ENCODE measurements at regions of chr16 and their contacts with region 1.

Region 1: GRCh38 chr16:66872943-66873684 is 7.2 kb upstream of the PDP2 start:
- DNase-seq: peak; percentile 93
- H3K4me3 Mint-ChIP-seq: peak overlapping the region; percentile 62
- H3K27ac Mint-ChIP-seq: peak overlapping the region; percentile 81
- H3K4me1 Mint-ChIP-seq: peaks cover 38% of the 10 kb centered on the region
- H3K27me3 Mint-ChIP-seq: no peaks in the 10 kb centered on the region

Region 2: GRCh38 chr16:66406534-66407221 is 466.4 kb before region 1 on chr16:
- CTCF ChIA-PET with region 1: interaction called, 31 read pairs
- intact Hi-C with region 1: loop called (anchors 1 kb)
- DNase-seq: peak; percentile 94
- H3K4me3 Mint-ChIP-seq: peak overlapping the region; percentile 83
- H3K27ac Mint-ChIP-seq: no peak overlapping the region
- H3K4me1 Mint-ChIP-seq: peaks cover 26% of the 10 kb centered on the region
- H3K27me3 Mint-ChIP-seq: no peaks in the 10 kb centered on the region

Region 3: DNA sequence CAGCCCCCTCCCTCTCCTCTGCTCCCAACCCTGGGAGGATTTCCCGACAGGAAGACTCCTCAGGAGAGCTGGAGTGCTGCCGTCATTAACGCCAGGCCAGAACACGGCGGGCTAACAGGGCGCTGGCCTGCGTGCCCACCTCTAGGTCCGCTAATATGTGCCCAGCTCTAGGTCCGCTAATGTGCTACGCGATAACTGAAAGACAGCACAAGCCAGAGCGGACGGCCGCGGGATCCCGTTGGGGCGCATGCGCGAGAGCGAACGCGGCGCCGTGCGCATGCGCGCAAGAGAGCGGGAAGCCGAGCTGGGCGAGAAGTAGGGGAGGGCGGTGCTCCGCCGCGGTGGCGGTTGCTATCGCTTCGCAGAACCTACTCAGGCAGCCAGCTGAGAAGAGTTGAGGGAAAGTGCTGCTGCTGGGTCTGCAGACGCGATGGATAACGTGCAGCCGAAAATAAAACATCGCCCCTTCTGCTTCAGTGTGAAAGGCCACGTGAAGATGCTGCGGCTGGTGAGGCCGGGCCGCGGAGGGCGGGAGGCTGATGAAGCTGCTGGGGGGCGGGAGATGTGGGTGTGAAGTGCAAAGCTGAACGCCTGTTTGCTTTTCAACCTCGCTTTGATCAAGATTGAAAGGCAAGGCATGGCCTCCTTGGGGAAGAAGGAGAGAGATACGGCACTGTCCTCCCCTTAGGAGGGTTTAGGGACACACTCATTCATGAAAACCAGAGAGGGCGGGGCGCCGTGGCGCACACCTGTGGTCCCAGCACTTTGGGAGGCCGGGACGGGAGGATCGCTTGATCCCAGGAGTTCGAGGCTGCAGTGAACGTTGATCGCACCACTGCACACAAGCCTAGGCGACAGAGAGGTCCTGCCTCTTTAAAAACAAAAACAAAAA is 320.6 kb before region 1 on chr16 and contains the start of gene CKLF:
- CTCF ChIA-PET with region 1: no interaction called
- intact Hi-C with region 1: loop called (anchors 2 kb)
- DNase-seq: peak; percentile 90
- H3K4me3 Mint-ChIP-seq: peak within 1 kb of the TSS; percentile 87
- H3K27ac Mint-ChIP-seq: peak within 1 kb of the TSS; percentile 95
- H3K4me1 Mint-ChIP-seq: peaks cover 60% of the 10 kb centered on the region
- H3K27me3 Mint-ChIP-seq: no peaks in the 10 kb centered on the region
- total RNA-seq, gene CKLF: 114 to 126 TPM

Region 4: DNA sequence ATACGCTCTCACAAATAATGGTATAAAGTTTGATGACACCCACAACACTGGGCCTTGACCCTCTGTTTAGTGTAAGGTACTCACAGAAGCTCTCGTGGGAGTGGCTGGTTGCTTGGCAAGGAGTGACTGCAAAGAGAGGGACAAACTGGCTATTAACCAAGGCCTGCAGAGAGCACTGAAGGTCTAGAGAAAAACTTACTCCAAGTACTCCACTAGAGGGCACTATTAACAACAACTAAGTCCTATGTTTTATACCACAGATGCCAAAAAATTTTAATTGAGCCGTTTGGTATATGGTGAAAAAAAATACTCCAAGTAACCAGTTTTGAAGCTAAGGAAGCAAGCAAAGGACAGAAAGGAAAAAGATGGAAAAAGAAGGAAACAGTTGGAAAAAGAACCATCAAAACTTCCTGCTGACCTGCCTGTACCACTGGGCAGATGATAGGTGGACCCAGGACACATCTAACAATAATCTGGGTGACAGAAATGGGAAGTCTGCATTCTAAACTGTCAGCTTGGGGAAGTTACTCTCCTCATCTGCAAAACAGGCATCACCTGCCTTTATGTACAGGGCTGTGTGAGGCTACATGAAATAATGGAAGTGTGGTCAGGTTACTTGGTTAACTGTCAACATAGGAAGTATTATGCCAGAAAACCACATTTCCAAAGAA is 144.9 kb before region 1 on chr16:
- CTCF ChIA-PET with region 1: interaction called, 18 read pairs
- intact Hi-C with region 1: no loop called
- DNase-seq: peak; percentile 12
- H3K4me3 Mint-ChIP-seq: no peak overlapping the region
- H3K27ac Mint-ChIP-seq: no peak overlapping the region
- H3K4me1 Mint-ChIP-seq: no peaks in the 10 kb centered on the region
- H3K27me3 Mint-ChIP-seq: no peaks in the 10 kb centered on the region

Region 5: GRCh38 chr16:66824006-66824405 is 49.1 kb before region 1 on chr16:
- CTCF ChIA-PET with region 1: interaction called, 132 read pairs
- intact Hi-C with region 1: no loop called
- DNase-seq: no peak
- H3K4me3 Mint-ChIP-seq: no peak overlapping the region
- H3K27ac Mint-ChIP-seq: no peak overlapping the region
- H3K4me1 Mint-ChIP-seq: peaks cover 25% of the 10 kb centered on the region
- H3K27me3 Mint-ChIP-seq: no peaks in the 10 kb centered on the region

Region 6: GRCh38 chr16:66853261-66854124 is 19.6 kb before region 1 on chr16:
- CTCF ChIA-PET with region 1: interaction called, 25 read pairs
- intact Hi-C with region 1: no loop called
- DNase-seq: no peak
- H3K4me3 Mint-ChIP-seq: no peak overlapping the region
- H3K27ac Mint-ChIP-seq: no peak overlapping the region
- H3K4me1 Mint-ChIP-seq: no peaks in the 10 kb centered on the region
- H3K27me3 Mint-ChIP-seq: no peaks in the 10 kb centered on the region

Region 7: GRCh38 chr16:66934153-66934838 is 61.2 kb after region 1 on chr16 and contains the start of gene CIAO2B:
- CTCF ChIA-PET with region 1: no interaction called
- intact Hi-C with region 1: loop called (anchors 2 kb)
- DNase-seq: peak; percentile 90
- H3K4me3 Mint-ChIP-seq: peak within 1 kb of the TSS; percentile 99
- H3K27ac Mint-ChIP-seq: peak within 1 kb of the TSS; percentile 96
- H3K4me1 Mint-ChIP-seq: peaks cover 53% of the 10 kb centered on the region
- H3K27me3 Mint-ChIP-seq: no peaks in the 10 kb centered on the region
- total RNA-seq, gene CIAO2B: 169 to 173 TPM

Measured in activated naive CD4-positive, alpha-beta T cell treated with anti-CD3 and anti-CD28 coated beads for 36 hours (primary cell).